H1 (cell line): ENCODE measurements at regions of chr6 and their contacts with region 1.

Region 1: DNA sequence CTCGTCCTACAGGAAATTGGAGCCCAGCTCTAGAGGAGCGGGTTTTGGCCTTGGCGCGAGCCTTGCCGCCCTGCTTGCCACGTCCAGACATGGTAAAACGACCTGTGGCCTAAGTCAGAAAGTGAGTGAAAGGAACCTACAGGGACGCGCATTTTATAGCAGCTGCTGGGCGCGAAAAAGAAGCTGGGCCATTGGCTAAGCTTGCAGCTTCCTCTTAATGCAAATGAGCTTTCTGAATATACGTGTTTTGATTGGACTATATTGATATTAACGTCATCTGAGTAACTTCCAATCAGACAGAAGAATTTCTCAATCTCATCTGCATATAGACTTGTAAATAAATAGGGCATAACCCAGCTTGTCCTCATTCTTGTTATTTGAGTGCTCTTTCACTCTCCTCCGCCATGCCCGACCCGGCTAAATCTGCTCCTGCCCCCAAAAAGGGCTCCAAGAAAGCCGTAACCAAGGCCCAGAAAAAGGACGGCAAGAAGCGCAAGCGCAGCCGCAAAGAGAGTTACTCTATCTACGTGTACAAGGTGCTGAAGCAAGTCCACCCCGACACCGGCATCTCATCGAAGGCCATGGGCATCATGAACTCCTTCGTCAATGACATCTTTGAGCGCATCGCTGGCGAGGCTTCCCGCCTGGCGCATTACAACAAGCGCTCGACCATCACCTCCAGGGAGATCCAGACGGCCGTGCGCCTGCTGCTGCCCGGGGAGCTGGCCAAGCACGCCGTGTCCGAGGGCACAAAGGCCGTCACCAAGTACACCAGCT is 18.9 kb downstream of the OR2B2 start:
- DNase-seq: peak; percentile 88 to 96
- H3K4me3 ChIP-seq: peak overlapping the region; percentile 94 to 99 (median 97)
- H3K27ac ChIP-seq: peak overlapping the region; percentile 95
- H3K4me1 ChIP-seq: peaks cover 3 to 9% (median 3%) of the 10 kb centered on the region in 4 experiments; a peak in 5 of 7 replicates
- H3K27me3 ChIP-seq: no peaks in the 10 kb centered on the region
- CTCF ChIP-seq: no peak
- EP300 ChIP-seq: no peak
- POLR2A ChIP-seq: peak; percentile 99 to 100
- RAD21 ChIP-seq: no peak

Region 2: DNA sequence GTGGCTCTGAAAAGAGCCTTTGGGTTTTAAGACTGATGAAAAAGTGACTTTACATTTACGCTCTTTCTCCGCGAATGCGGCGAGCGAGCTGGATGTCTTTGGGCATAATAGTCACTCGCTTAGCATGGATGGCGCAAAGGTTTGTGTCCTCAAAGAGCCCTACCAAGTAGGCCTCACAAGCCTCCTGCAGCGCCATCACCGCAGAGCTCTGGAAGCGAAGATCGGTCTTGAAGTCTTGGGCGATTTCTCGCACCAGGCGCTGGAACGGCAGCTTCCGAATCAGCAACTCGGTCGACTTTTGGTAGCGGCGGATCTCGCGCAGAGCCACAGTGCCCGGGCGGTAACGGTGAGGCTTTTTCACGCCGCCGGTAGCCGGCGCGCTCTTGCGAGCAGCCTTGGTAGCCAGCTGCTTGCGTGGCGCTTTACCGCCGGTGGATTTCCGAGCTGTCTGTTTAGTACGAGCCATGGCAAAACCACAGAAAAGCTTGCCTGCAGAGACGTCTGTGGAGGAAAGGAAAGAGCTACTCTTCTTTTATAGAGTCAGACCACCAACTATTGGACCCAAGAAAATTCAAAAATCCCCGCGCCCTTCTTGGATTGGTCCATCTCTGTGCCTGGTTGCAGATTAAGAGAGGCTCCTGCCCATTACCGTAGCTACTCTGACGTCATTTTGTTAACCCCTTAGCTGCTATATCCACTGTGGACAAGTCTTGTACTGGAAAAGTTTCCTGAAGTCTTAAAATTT is 1861.5 kb before region 1 on chr6:
- CTCF ChIA-PET with region 1: no interaction called
- POLR2A ChIA-PET with region 1: interaction called, 56 read pairs
- DNase-seq: peak; percentile 82 to 88
- H3K4me3 ChIP-seq: peak overlapping the region; percentile 81 to 95 (median 92)
- H3K27ac ChIP-seq: peak overlapping the region; percentile 96
- H3K4me1 ChIP-seq: peaks cover 2 to 18% (median 13%) of the 10 kb centered on the region in 4 experiments; a peak in 5 of 7 replicates
- H3K27me3 ChIP-seq: no peaks in the 10 kb centered on the region
- CTCF ChIP-seq: no peak
- EP300 ChIP-seq: peak in 1 of 2 experiments; percentile 2; a peak in 1 of 3 replicates
- POLR2A ChIP-seq: peak; percentile 99 to 100
- RAD21 ChIP-seq: no peak

Region 3: DNA sequence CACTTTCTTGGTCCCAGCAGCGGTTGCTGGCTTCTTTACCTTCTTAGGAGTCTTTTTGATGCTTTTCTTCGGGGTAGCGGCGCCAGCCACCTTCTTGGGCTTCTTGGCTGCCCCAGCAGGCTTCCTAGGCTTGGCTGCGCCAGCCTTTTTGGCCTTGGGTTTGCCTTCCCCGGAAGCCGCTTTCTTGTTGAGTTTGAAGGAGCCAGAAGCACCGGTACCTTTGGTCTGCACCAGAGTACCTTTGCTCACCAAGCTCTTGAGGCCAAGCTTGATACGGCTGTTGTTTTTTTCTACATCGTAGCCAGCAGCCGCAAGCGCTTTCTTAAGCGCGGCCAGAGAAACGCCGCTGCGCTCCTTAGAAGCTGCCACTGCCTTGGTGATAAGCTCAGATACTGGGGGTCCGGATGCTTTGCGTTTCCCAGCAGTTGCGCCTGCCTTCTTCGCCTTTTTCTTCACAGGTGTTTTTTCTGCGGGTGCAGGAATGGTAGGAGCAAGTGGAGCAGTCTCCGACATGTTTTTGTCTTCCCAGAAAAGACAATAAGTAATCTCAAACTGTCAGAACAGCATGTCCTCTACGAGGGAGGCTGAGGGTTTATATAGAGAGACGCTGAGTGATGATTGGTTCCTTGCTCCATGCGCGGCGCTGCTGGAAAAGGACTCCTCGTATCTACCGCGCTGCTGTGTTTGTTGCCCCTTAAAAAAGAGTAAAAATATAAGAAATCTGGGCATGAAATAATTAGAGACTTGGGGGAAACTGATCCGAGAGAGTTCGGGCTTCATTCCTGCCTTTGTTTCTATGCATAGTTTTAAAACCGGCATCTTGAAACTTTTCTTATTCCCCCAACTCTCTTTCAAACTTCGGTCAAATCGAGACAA is 1658.6 kb before region 1 on chr6:
- CTCF ChIA-PET with region 1: no interaction called
- POLR2A ChIA-PET with region 1: interaction called, 29 read pairs
- DNase-seq: peak in 1 of 2 experiments; percentile 85
- H3K4me3 ChIP-seq: peak overlapping the region; percentile 83 to 91 (median 88)
- H3K27ac ChIP-seq: peak overlapping the region; percentile 93
- H3K4me1 ChIP-seq: peaks cover 0 to 3% (median 0%) of the 10 kb centered on the region in 4 experiments; a peak in 3 of 7 replicates
- H3K27me3 ChIP-seq: no peaks in the 10 kb centered on the region
- CTCF ChIP-seq: no peak
- EP300 ChIP-seq: no peak
- POLR2A ChIP-seq: peak; percentile 86
- RAD21 ChIP-seq: no peak

Region 4: DNA sequence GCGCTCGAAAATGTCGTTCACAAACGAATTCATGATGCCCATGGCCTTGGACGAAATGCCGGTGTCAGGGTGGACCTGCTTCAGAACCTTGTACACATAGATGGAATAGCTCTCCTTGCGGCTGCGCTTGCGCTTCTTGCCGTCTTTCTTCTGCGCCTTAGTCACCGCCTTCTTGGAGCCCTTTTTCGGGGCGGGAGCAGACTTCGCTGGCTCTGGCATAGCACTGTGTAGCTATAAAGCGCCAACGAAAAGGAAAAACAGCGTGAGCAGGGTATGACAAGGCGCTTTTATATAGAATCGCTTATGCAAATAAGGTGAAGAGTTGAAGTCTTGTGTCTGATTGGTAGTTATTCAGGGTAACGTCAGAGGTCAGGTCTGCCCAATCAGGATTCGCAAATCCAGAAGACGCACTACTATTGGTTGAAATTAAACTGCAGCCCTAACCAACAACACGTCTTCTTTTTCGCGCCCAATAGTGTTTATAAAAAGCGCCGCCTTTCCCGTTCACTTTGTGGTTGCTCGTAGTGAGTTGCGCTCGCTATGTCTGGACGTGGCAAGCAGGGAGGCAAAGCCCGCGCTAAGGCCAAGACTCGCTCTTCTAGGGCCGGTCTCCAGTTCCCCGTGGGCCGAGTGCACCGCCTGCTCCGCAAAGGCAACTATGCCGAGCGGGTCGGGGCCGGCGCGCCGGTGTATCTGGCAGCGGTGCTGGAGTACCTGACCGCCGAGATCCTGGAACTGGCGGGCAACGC is 760.5 kb before region 1 on chr6:
- CTCF ChIA-PET with region 1: no interaction called
- POLR2A ChIA-PET with region 1: interaction called, 49 read pairs
- DNase-seq: peak; percentile 95 to 98
- H3K4me3 ChIP-seq: peak overlapping the region; percentile 89 to 98 (median 90)
- H3K27ac ChIP-seq: peak overlapping the region; percentile 96
- H3K4me1 ChIP-seq: peaks cover 0 to 5% (median 0%) of the 10 kb centered on the region in 4 experiments; a peak in 2 of 7 replicates
- H3K27me3 ChIP-seq: no peaks in the 10 kb centered on the region
- CTCF ChIP-seq: no peak
- EP300 ChIP-seq: no peak
- POLR2A ChIP-seq: peak; percentile 98 to 99
- RAD21 ChIP-seq: no peak

Region 5: DNA sequence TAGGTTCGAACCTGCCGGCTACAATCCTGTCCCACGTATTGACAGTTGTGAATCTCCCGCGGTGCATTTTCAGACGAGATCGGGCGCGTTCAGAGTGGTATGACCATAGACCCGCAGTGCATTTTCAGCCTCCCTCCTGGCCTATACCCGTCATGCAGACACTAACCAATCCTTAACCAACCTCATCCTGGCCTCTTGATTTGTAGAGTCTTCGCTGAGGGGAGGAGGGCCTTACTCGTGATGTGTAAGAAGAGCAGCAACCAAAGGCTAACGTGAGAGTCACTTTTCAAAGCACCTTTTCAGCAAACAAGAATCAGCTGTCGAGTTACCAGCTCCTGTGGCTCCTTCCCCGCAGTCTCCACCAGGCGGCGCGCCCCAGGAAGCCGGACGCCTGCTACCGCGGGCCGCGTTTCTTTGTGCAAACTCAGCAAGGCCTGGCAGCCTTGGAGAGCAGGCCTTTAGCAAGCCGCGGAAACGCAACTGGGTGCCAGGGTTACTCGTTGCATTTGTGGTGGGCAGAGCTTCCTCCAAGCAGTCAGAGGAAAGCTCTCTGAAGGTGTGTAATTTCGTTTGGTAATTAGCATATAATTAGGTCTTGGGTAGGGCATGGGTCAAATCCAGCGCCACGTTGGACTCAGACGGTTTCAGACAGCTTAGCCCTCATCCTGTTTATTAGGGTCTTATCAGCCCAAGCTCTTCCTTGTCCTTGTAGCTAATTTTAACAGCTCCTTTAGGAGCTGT is 120.8 kb before region 1 on chr6:
- CTCF ChIA-PET with region 1: interaction called, 4 read pairs
- POLR2A ChIA-PET with region 1: interaction called, 13 read pairs
- DNase-seq: peak in 1 of 2 experiments; percentile 94
- H3K4me3 ChIP-seq: peak overlapping the region; percentile 15 to 59 (median 48); a peak in 7 of 8 replicates
- H3K27ac ChIP-seq: no peak overlapping the region
- H3K4me1 ChIP-seq: peaks cover 6 to 13% (median 12%) of the 10 kb centered on the region in 4 experiments; a peak in 6 of 7 replicates
- H3K27me3 ChIP-seq: peaks cover 31 to 64% (median 59%) of the 10 kb centered on the region in 4 experiments
- CTCF ChIP-seq: peak; percentile 85 to 87 (median 86)
- EP300 ChIP-seq: peak in 1 of 2 experiments; percentile 49; a peak in 1 of 3 replicates
- POLR2A ChIP-seq: no peak
- RAD21 ChIP-seq: peak; percentile 52 to 71

Region 6: GRCh38 chr6:27825025-27825793 is 68.0 kb before region 1 on chr6:
- CTCF ChIA-PET with region 1: interaction called, 15 read pairs
- POLR2A ChIA-PET with region 1: interaction called, 644 read pairs
- DNase-seq: no peak
- H3K4me3 ChIP-seq: peak overlapping the region; percentile 59 to 90 (median 81)
- H3K27ac ChIP-seq: peak overlapping the region; percentile 95; the same call in 1 of the 2 replicates
- H3K4me1 ChIP-seq: peaks cover 0 to 3% (median 0%) of the 10 kb centered on the region in 4 experiments; a peak in 1 of 7 replicates
- H3K27me3 ChIP-seq: no peaks in the 10 kb centered on the region
- CTCF ChIP-seq: no peak
- EP300 ChIP-seq: no peak
- POLR2A ChIP-seq: peak in 1 of 2 experiments; percentile 32; a peak in 2 of 3 replicates
- RAD21 ChIP-seq: no peak

Region 7: DNA sequence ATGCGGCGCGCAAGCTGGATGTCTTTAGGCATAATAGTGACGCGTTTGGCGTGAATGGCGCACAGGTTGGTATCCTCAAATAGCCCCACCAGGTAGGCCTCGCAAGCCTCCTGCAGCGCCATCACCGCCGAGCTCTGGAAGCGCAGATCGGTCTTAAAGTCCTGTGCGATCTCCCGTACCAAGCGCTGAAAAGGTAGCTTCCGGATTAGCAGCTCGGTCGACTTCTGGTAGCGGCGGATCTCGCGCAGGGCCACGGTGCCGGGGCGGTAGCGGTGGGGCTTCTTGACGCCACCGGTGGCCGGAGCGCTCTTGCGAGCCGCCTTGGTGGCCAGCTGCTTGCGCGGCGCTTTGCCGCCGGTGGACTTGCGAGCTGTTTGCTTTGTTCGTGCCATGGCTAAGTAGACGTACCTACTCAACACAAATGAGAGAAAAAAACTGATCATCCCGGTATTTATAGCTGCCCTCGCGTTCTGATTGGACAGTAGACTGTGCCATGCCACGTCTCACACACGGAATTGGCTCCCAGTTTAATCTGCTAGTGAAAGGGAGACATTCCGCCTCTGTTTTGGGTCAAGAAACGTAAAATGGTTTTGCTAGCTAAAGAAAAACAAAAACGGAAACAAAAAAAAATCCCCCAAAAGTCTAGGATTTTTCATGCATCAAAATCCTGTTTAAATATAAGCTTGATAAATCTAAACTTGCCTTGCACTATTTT is 21.2 kb before region 1 on chr6:
- CTCF ChIA-PET with region 1: interaction called, 19 read pairs
- POLR2A ChIA-PET with region 1: interaction called, 3,039 read pairs
- DNase-seq: peak in 1 of 2 experiments; percentile 89
- H3K4me3 ChIP-seq: peak overlapping the region; percentile 61 to 73 (median 67)
- H3K27ac ChIP-seq: peak overlapping the region; percentile 96
- H3K4me1 ChIP-seq: peaks cover 0 to 16% (median 9%) of the 10 kb centered on the region in 4 experiments; a peak in 5 of 7 replicates
- H3K27me3 ChIP-seq: no peaks in the 10 kb centered on the region
- CTCF ChIP-seq: peak in 2 of 3 experiments; percentile 22 to 26; a peak in 3 of 4 replicates
- EP300 ChIP-seq: no peak; a peak in 1 of 3 replicates
- POLR2A ChIP-seq: peak; percentile 97 to 98
- RAD21 ChIP-seq: no peak